Natural killer cell (primary cell): ENCODE measurements at regions of chr6 and their contacts with region 1.

Region 1: DNA sequence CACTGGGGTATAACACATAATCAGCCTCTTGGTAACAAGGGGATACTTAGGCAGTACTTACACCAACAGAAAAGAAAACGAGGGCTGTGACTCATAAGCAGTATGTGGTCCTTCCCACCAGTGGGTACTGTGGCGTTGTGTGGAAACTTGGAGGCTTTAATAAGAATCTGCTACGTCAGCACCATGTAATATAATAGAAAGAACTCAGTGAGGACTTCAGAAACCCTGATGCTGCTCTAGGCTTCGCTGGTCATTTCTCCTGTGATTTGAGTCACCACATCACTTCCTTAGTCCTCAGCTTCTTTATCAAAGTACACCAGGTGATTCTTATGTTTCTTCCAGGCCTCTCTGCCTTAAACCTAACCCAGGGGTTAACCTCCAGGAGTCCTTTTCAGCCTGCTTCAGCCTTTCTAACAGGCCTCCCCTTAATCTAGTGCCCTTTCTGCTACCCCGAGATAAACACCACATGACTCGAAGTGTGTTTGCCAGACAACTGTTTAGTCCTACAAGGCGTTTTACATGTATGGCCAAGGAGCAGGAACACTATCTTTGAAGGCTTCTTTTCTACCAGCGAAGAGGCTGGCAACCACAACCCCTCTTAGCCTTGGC is 68.5 kb downstream of the FYN start:
- DNase-seq: peak; percentile 73 to 88
- ATAC-seq: peak; percentile 76 to 85 (median 85)
- H3K4me3 ChIP-seq: no peak overlapping the region
- H3K4me3 Mint-ChIP-seq: peak overlapping the region; percentile 78
- H3K27ac ChIP-seq: peak overlapping the region; percentile 75
- H3K27ac Mint-ChIP-seq: peak overlapping the region; percentile 94 to 98
- H3K4me1 ChIP-seq: peaks cover 58% of the 10 kb centered on the region
- H3K4me1 Mint-ChIP-seq: peaks cover 80 to 94% of the 10 kb centered on the region in 2 donors
- H3K27me3 ChIP-seq: no peaks in the 10 kb centered on the region
- H3K27me3 Mint-ChIP-seq: no peaks in the 10 kb centered on the region
- CTCF ChIP-seq: no peak

Region 2: DNA sequence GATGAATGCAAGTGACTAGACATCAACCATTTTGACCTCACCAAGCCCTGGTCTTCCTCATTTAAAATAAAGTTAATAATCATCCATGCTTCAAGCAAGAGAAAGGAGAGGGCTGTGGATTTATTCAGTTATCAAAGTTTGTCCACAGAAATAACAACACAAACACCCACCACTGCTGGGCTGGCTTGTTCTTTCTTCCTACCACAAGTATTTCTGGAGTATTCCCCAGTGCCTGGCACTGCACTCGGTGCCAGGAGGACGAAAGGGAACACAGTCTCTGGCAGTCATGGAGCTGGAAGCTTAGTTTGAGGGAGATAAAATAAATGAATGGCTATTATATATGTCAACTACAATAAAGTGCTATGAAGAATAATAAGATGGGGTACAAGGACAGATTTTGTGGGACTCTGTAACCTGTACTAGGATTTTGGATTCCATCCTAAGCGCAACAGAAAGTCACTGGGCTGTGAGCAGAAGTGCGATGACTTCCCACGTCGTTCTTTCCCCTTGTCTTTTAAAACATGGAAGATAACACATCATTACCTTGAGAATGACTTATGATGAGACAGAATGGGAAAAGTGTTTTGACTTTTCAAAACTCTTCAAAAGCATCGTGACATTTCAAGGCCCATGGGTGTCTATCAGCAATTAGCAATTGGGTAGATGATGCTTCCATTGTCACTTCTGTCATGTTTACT is 124.6 kb before region 1 on chr6:
- intact Hi-C with region 1: no loop called
- DNase-seq: no peak
- ATAC-seq: no peak
- H3K4me3 ChIP-seq: no peak overlapping the region
- H3K4me3 Mint-ChIP-seq: no peak overlapping the region
- H3K27ac ChIP-seq: no peak overlapping the region
- H3K27ac Mint-ChIP-seq: peak overlapping the region; percentile 42 to 72
- H3K4me1 ChIP-seq: peaks cover 29% of the 10 kb centered on the region
- H3K4me1 Mint-ChIP-seq: peaks cover 65 to 74% of the 10 kb centered on the region in 2 donors
- H3K27me3 ChIP-seq: no peaks in the 10 kb centered on the region
- H3K27me3 Mint-ChIP-seq: no peaks in the 10 kb centered on the region
- CTCF ChIP-seq: no peak

Region 3: GRCh38 chr6:111709615-111710398 is 94.9 kb before region 1 on chr6:
- intact Hi-C with region 1: loop called (anchors 1 kb)
- DNase-seq: peak in 1 of 2 donors; percentile 86
- ATAC-seq: peak; percentile 81
- H3K4me3 ChIP-seq: no peak overlapping the region
- H3K4me3 Mint-ChIP-seq: peak overlapping the region; percentile 58
- H3K27ac ChIP-seq: peak overlapping the region; percentile 56
- H3K27ac Mint-ChIP-seq: peak overlapping the region; percentile 98 to 100
- H3K4me1 ChIP-seq: peaks cover 44% of the 10 kb centered on the region
- H3K4me1 Mint-ChIP-seq: peaks cover 53 to 61% of the 10 kb centered on the region in 2 donors
- H3K27me3 ChIP-seq: no peaks in the 10 kb centered on the region
- H3K27me3 Mint-ChIP-seq: no peaks in the 10 kb centered on the region
- CTCF ChIP-seq: peak; percentile 76

Region 4: DNA sequence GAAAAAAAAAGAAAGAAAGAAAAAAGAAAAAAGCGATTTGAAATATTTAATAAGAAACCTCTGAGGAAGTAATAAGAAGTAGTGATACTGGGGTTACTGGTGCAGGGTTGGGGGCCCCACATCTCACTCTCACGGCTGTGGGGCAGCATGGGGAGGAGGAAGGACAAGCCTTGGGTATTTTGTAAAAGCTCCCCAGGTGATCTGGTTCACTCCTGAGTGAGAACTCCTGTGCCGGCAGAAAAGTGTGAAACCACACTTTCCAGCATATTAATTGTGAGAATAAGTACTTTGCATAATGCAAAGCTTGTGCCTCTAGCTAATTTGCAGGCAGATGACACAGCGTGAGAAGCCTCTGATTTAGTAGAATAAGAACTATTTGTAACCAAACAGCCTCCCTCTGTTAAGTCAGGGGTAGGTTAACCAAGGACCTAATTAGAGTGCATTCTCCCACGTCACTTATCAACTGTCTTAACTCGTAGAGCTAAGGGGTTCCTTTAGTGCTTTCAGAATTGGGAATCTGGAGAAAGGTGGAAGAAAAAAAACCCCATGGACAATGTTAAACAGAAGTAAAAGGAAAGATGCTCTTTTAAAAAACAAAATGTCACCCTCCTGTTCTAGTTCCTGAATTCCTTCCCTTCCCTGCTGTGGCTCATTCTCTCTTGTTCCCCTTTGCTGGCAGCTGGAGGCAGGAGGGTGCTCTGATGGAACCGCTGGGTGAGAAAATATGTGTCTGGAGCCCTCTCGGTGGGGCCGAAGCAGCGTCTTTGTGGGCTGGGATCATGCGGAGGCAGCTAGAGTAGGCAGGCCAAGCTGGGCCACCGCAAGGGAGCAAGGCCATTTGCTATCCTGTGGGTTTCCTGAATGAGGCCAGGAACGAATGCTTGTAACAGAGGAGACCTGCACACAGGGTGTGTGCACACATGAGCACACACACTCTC is 40.2 kb before region 1 on chr6:
- intact Hi-C with region 1: loop called (anchors 2 kb)
- DNase-seq: peak; percentile 60 to 86
- ATAC-seq: peak; percentile 41 to 43 (median 41)
- H3K4me3 ChIP-seq: no peak overlapping the region
- H3K4me3 Mint-ChIP-seq: peak overlapping the region; percentile 95
- H3K27ac ChIP-seq: peak overlapping the region; percentile 99
- H3K27ac Mint-ChIP-seq: peak overlapping the region; percentile 99 to 100
- H3K4me1 ChIP-seq: peaks cover 82% of the 10 kb centered on the region
- H3K4me1 Mint-ChIP-seq: peaks cover 99 to 100% of the 10 kb centered on the region in 2 donors
- H3K27me3 ChIP-seq: no peaks in the 10 kb centered on the region
- H3K27me3 Mint-ChIP-seq: no peaks in the 10 kb centered on the region
- CTCF ChIP-seq: no peak

Region 5: GRCh38 chr6:111837641-111838500 is 33.1 kb after region 1 on chr6:
- intact Hi-C with region 1: loop called (anchors 2 kb)
- DNase-seq: peak; percentile 40 to 72
- ATAC-seq: peak; percentile 69 to 82 (median 72)
- H3K4me3 ChIP-seq: no peak overlapping the region
- H3K4me3 Mint-ChIP-seq: peak overlapping the region; percentile 70
- H3K27ac ChIP-seq: peak overlapping the region; percentile 89
- H3K27ac Mint-ChIP-seq: no peak overlapping the region
- H3K4me1 ChIP-seq: peaks cover 68% of the 10 kb centered on the region
- H3K4me1 Mint-ChIP-seq: peaks cover 34 to 36% of the 10 kb centered on the region in 2 donors
- H3K27me3 ChIP-seq: no peaks in the 10 kb centered on the region
- H3K27me3 Mint-ChIP-seq: no peaks in the 10 kb centered on the region
- CTCF ChIP-seq: no peak

Region 6: DNA sequence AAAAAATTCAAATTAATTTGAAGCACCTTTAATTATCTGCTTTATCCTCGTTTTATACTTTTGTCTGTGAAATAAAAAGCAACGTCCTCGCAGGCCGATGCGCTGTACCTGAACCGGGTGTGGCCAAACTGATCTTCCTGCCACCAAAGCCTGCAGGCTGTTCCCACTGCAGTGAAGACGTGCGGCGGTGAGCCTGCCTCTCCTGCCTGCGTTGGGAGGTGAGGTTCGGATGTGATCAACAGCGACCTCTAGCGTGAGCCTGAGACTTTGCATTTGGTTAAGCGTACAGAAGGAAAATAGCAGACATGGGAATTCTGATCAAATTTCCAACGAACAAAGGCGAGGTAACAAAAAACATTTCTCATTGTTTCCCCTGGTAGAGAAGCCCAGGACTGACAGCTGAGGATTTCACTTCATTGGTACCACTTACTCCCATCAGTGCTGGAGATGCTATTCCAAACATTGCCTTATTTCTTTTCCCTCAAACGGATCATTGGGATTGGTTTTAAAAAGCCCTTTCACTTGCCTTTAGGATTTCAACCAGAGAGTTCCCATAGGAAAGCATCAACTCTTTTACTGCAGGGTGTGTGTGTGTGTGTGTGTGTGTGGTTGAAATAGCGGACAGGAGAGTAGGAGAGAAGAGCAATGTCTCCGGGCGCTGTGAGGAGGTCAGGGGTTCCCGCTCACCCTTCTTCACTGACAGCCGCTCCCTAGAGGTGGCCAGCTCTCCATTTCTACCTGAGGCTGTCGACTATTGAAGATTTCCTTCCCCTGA is 192.5 kb after region 1 on chr6:
- intact Hi-C with region 1: loop called (anchors 10 kb)
- DNase-seq: peak; percentile 66 to 93
- ATAC-seq: peak; percentile 81 to 90 (median 86)
- H3K4me3 ChIP-seq: no peak overlapping the region
- H3K4me3 Mint-ChIP-seq: peak overlapping the region; percentile 18
- H3K27ac ChIP-seq: no peak overlapping the region
- H3K27ac Mint-ChIP-seq: peak overlapping the region; percentile 27 to 61
- H3K4me1 ChIP-seq: peaks cover 23% of the 10 kb centered on the region
- H3K4me1 Mint-ChIP-seq: peaks cover 30 to 33% of the 10 kb centered on the region in 2 donors
- H3K27me3 ChIP-seq: no peaks in the 10 kb centered on the region
- H3K27me3 Mint-ChIP-seq: no peaks in the 10 kb centered on the region
- CTCF ChIP-seq: peak; percentile 94